Left cardiac atrium (tissue), 4 donors: ENCODE measurements at regions of chr20 and their contacts with region 1.

Region 1: DNA sequence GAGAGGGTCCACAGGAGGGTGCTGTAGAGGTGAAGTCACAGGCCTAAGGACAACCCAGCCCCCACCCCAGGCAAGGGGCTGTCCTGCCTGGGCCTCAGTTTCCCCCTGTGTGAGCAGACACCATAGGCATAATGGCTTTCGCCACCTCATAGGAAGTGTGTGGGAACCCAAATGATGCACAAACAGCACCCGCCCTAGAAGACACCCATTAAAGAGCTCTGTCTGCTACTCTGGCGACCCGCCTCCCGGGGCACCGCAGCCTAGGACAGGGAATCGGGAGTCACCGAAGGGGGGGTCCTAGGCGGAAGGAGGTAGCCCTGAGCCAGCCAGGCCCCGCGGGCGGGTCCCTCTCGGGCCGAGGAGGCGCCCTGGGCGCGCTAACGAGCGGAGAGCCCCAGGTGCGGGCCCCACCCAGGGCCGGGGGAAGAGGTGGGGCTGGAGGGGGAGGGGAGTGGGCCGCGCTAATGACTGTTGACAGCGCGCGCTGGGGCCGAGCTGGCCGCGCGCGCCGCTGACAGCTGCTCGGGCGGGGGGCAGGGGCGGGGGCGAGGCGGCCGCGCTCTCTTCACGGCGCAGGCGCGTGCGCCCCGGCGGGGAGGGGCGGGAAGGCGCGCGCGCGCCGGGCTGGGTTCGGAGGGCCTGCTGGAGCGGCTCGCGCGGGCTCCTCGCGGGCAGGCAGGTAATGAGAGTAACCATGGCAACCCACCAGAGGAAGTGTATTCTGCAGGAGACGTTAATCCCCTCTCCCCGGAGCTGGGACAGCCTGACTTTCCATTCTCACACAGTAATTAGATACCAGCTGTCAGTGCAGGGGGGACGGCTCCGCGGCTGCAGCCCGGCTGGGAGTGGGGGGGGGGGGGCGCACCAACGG is 48.9 kb downstream of the NOL4L start:
- DNase-seq: peak; percentile 54
- ATAC-seq: peak; percentile 77 to 87

Region 2: GRCh38 chr20:32494483-32495216 is 41.5 kb before region 1 on chr20:
- intact Hi-C with region 1: no loop called
- DNase-seq: peak; percentile 12
- ATAC-seq: no peak

Region 3: DNA sequence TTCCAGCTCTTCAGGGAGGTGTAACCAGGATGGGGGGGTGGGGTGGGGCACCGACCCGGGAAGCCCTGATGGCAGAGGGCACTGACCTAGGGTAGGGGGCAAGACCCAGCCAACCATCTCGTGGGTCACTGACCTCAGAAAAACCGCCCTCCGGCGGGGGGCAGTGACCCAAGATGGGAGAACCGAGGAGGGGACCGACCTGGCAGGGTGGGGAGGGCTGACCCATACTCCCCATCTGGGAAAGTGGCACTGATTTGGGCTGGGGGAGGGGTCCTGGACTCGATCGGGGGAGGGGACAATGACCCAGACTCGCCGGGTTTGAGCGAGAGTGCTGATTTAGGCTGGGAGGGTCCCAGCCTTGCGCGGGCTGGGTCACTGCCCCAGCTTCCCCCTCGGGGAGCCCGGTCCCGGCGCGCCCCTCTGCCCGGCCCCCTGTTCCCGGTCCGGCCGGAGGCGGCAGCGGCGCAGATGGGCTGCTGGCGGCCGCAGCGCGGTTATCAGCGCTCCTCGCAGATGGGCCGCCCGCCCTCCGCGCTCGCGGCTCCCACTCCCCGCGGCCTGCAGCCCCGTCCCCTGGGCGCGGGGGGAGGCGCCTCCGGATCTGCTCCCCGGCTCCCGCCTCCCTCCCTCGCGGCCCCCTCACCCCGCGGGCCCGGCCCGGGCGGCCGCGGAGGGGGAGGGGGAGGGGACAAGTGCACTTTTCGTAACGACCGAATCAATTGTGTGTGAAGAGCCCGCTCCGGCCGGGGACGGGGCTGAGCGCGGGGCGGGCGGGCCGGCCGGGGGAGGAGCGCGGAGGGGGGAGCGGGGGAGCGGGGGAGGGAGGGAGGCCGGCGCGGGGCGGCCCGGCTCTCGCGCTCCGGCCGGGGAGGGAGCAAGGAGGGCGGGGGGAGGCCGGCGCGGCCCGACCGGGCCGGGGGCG is 46.7 kb after region 1 on chr20:
- intact Hi-C with region 1: loop called in 1 of 2 experiments (anchors 5 kb)
- DNase-seq: peak; percentile 38
- ATAC-seq: peak; percentile 37 to 64